Activated B cell treated with CpG ODN at 0.5 μM for 24 hours (primary cell): ENCODE measurements at regions of chr9 and their contacts with region 1.

Region 1: DNA sequence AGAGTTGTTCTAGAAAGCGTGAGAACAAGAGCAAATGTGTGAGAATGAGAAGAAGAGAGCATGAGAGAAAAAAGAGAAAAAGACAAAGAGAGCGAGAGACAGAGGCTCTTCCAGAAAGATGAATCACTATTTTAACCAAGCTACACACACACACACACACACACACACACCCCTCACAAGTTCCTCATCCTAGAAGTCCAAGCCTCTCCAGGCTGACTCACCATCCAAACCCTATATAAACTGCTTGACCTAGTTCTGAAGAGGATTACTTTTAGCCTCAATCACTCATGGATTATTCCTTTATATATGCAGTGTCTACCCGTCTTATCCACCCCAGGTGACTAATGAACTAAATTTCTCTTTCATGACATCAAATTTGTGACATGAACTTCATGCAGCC is 37.6 kb downstream of the C9orf57 start:
- DNase-seq: no peak
- ATAC-seq: no peak
- H3K4me3 Mint-ChIP-seq: no peak overlapping the region
- H3K27ac Mint-ChIP-seq: no peak overlapping the region
- H3K4me1 Mint-ChIP-seq: no peaks in the 10 kb centered on the region
- H3K27me3 Mint-ChIP-seq: no peaks in the 10 kb centered on the region
- CTCF ChIP-seq: no peak

Region 2: DNA sequence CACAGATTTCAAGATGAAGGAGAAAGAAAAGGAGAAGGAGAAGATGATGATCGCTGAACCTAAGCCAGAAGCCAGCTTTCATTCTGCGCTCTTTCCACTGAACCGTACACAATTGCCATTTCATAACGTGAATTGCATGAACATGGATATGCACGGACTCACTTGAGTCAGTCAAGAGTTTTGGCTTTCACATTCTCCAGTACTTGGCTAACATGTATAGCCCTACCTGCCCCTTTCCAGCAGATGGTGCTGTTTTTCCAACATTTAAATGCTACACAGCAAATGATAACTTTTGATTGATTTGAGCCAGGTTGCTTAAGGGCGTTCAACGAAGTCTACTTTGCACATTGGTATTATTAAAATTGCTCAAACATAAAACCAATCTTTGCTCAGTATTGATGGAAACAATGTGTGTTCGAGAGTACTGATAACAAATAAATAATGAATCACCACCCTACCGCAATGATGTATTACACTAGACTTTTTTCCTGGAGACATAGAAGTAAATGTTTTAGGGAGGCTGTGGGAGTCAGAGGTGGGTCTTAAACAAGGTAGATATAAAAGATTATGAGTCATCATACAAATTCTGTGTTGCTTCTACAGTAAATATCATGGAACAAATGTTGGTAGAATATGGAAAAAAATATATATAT is 1097.8 kb before region 1 on chr9:
- CTCF ChIA-PET with region 1: no interaction called
- POLR2A ChIA-PET with region 1: no interaction called
- intact Hi-C with region 1: loop called (anchors 10 kb)
- DNase-seq: no peak
- ATAC-seq: no peak
- H3K4me3 Mint-ChIP-seq: no peak overlapping the region
- H3K27ac Mint-ChIP-seq: no peak overlapping the region
- H3K4me1 Mint-ChIP-seq: no peaks in the 10 kb centered on the region
- H3K27me3 Mint-ChIP-seq: no peaks in the 10 kb centered on the region
- CTCF ChIP-seq: no peak

Region 3: GRCh38 chr9:71604197-71605063 is 418.4 kb before region 1 on chr9:
- CTCF ChIA-PET with region 1: interaction called, 12 read pairs
- POLR2A ChIA-PET with region 1: no interaction called
- intact Hi-C with region 1: loop called (anchors 1 kb)
- DNase-seq: peak; percentile 46
- ATAC-seq: peak; percentile 78
- H3K4me3 Mint-ChIP-seq: no peak overlapping the region
- H3K27ac Mint-ChIP-seq: no peak overlapping the region
- H3K4me1 Mint-ChIP-seq: peaks cover 4% of the 10 kb centered on the region
- H3K27me3 Mint-ChIP-seq: no peaks in the 10 kb centered on the region
- CTCF ChIP-seq: peak; percentile 59

Region 4: GRCh38 chr9:71683598-71684235 is 339.1 kb before region 1 on chr9:
- CTCF ChIA-PET with region 1: no interaction called
- POLR2A ChIA-PET with region 1: no interaction called
- intact Hi-C with region 1: no loop called
- DNase-seq: no peak
- ATAC-seq: no peak
- H3K4me3 Mint-ChIP-seq: no peak overlapping the region
- H3K27ac Mint-ChIP-seq: peak overlapping the region; percentile 27
- H3K4me1 Mint-ChIP-seq: peaks cover 74% of the 10 kb centered on the region
- H3K27me3 Mint-ChIP-seq: no peaks in the 10 kb centered on the region
- CTCF ChIP-seq: no peak

Region 5: DNA sequence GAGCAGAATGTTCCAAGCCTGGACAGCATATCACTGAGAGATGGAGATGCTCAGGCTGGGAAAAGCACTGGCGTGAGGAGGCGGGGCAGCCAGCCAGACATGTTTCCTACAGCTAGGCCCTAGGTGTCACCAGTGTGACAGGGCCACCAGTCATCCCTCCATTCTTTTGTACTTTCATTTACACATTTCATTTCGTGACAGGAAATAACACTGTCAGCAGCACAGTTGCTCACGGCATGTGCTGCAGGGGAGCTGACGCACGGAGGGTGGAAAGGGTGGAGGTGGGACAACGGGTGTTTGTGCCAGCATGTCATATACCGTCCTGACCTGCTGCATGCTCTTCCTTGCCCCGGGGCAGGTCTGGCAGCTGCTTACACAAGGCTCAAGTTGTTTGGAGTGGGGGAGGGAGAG is 239.7 kb before region 1 on chr9:
- CTCF ChIA-PET with region 1: interaction called, 17 read pairs
- POLR2A ChIA-PET with region 1: no interaction called
- intact Hi-C with region 1: loop called (anchors 1 kb)
- DNase-seq: peak; percentile 37
- ATAC-seq: peak; percentile 83
- H3K4me3 Mint-ChIP-seq: peak overlapping the region; percentile 68
- H3K27ac Mint-ChIP-seq: peak overlapping the region; percentile 92
- H3K4me1 Mint-ChIP-seq: peaks cover 41% of the 10 kb centered on the region
- H3K27me3 Mint-ChIP-seq: no peaks in the 10 kb centered on the region
- CTCF ChIP-seq: no peak

Region 6: DNA sequence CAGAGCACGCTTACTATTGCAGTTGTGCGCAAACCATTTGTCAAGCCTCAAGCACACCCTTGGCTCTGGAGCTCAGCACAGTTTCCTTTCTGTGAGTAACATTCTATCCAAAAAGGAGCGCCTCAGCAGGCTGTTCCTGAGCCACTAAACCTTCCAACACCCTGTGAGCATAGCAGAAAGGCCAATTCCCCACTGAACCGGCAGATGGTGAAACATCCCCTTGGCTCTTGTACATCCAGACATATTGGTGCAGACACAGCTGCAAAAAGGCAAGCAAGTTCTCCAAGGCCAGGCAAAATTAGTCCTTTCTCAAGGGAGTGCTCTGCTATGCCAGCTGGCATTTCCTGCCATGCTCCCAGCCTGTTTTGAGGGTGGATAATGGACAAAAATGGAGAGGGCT is 210.5 kb before region 1 on chr9:
- CTCF ChIA-PET with region 1: interaction called, 88 read pairs
- POLR2A ChIA-PET with region 1: no interaction called
- intact Hi-C with region 1: loop called (anchors 1 kb)
- DNase-seq: no peak
- ATAC-seq: no peak
- H3K4me3 Mint-ChIP-seq: no peak overlapping the region
- H3K27ac Mint-ChIP-seq: no peak overlapping the region
- H3K4me1 Mint-ChIP-seq: peaks cover 20% of the 10 kb centered on the region
- H3K27me3 Mint-ChIP-seq: no peaks in the 10 kb centered on the region
- CTCF ChIP-seq: no peak

Region 7: DNA sequence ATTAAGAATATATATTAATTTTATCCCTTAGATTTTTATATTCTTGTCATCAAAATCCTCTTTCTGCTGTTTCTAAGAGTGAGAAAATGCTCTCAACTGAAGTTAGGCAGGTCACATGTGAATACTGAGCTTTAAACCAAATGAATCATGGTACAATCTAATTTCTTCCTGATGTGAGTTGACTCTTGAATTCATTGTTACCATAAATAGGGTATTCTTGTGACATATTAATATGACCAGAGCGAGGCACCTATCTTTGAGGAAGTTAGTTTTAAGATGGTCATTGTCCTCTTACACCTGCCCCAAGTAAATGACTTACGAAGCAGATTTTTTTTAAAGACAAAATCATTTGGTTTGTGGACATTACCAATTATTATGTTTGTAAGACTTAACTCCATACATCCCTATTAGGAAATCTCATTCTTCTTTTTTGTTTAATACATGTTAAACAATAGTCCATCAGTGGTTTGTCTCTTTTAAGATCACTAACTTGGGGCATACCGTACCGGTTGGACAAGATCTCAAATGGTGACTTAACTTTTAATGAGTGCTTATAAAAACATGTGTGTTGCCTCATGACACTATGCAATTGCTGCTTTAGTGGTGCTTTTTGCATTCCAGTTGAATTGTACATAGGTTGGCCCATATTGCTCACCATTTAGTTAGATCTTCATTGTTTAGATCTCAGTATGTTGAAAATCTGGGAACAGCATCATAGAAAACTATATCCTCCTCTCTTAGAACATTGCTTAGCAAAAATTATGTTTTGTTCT is 93.8 kb before region 1 on chr9:
- CTCF ChIA-PET with region 1: no interaction called
- POLR2A ChIA-PET with region 1: no interaction called
- intact Hi-C with region 1: no loop called
- DNase-seq: no peak
- ATAC-seq: no peak
- H3K4me3 Mint-ChIP-seq: no peak overlapping the region
- H3K27ac Mint-ChIP-seq: no peak overlapping the region
- H3K4me1 Mint-ChIP-seq: peaks cover 8% of the 10 kb centered on the region
- H3K27me3 Mint-ChIP-seq: no peaks in the 10 kb centered on the region
- CTCF ChIP-seq: no peak

Region 8: GRCh38 chr9:72038890-72039410 is 16.1 kb after region 1 on chr9:
- CTCF ChIA-PET with region 1: interaction called, 17 read pairs
- POLR2A ChIA-PET with region 1: interaction called, 12 read pairs
- intact Hi-C with region 1: no loop called
- DNase-seq: peak; percentile 39
- ATAC-seq: peak; percentile 81
- H3K4me3 Mint-ChIP-seq: no peak overlapping the region
- H3K27ac Mint-ChIP-seq: no peak overlapping the region
- H3K4me1 Mint-ChIP-seq: peaks cover 5% of the 10 kb centered on the region
- H3K27me3 Mint-ChIP-seq: peaks cover 3% of the 10 kb centered on the region
- CTCF ChIP-seq: peak; percentile 64